IMR-90 (cell line): ENCODE measurements at regions of chr2 and their contacts with region 1.

Region 1: GRCh38 chr2:222982010-222982908 is 69.7 kb upstream of the KCNE4 start:
- DNase-seq: peak; percentile 89
- ATAC-seq: peak; percentile 95
- H3K4me3 ChIP-seq: no peak overlapping the region
- H3K27ac ChIP-seq: no peak overlapping the region
- H3K4me1 ChIP-seq: peaks cover 5% of the 10 kb centered on the region; the same call in 1 of the 2 replicates
- H3K27me3 ChIP-seq: no peaks in the 10 kb centered on the region
- CTCF ChIP-seq: peak; percentile 81
- POLR2A ChIP-seq: no peak
- RAD21 ChIP-seq: peak; percentile 85

Region 2: GRCh38 chr2:222922019-222922800 is 60.0 kb before region 1 on chr2:
- CTCF ChIA-PET with region 1: no interaction called
- POLR2A ChIA-PET with region 1: no interaction called
- dilution Hi-C with region 1: no loop called
- in situ Hi-C with region 1: no loop called
- intact Hi-C with region 1: no loop called
- DNase-seq: no peak
- ATAC-seq: no peak
- H3K4me3 ChIP-seq: no peak overlapping the region
- H3K27ac ChIP-seq: no peak overlapping the region
- H3K4me1 ChIP-seq: peaks cover 12% of the 10 kb centered on the region
- H3K27me3 ChIP-seq: no peaks in the 10 kb centered on the region
- CTCF ChIP-seq: no peak
- POLR2A ChIP-seq: no peak
- RAD21 ChIP-seq: no peak

Region 3: DNA sequence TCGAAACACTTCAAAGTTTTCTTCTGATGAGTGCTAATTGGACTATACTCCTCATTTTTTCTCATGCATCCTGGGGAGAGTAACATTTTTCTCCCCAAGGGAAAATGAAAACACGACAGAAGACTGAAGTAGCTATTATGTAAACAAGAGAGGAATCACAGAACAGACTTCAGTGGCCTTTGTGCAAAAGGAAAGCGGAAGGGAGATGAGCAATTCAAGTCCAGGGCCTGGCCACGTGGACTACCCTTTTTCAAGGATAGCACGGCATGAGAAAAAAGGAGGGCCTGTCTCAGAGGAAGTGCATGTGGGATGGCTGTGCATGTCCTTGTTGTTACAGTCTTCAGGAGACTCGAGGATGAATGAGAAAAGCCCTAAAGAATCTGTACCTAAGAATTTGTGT is 25.9 kb after region 1 on chr2:
- CTCF ChIA-PET with region 1: no interaction called
- POLR2A ChIA-PET with region 1: no interaction called
- dilution Hi-C with region 1: no loop called
- in situ Hi-C with region 1: no loop called
- intact Hi-C with region 1: no loop called
- DNase-seq: peak; percentile 77
- ATAC-seq: peak; percentile 33
- H3K4me3 ChIP-seq: no peak overlapping the region
- H3K27ac ChIP-seq: peak overlapping the region; percentile 33
- H3K4me1 ChIP-seq: peaks cover 9% of the 10 kb centered on the region
- H3K27me3 ChIP-seq: no peaks in the 10 kb centered on the region
- CTCF ChIP-seq: no peak
- POLR2A ChIP-seq: no peak
- RAD21 ChIP-seq: no peak

Region 4: GRCh38 chr2:223101340-223102039 is 119.2 kb after region 1 on chr2:
- CTCF ChIA-PET with region 1: interaction called, 4 read pairs
- POLR2A ChIA-PET with region 1: no interaction called
- dilution Hi-C with region 1: no loop called
- in situ Hi-C with region 1: no loop called
- intact Hi-C with region 1: loop called (anchors 1 kb)
- DNase-seq: peak; percentile 55
- ATAC-seq: peak; percentile 71
- H3K4me3 ChIP-seq: no peak overlapping the region
- H3K27ac ChIP-seq: no peak overlapping the region
- H3K4me1 ChIP-seq: peaks cover 4% of the 10 kb centered on the region
- H3K27me3 ChIP-seq: no peaks in the 10 kb centered on the region
- CTCF ChIP-seq: peak; percentile 58
- POLR2A ChIP-seq: no peak
- RAD21 ChIP-seq: peak; percentile 70

Region 5: GRCh38 chr2:223247136-223247535 is 264.9 kb after region 1 on chr2:
- CTCF ChIA-PET with region 1: interaction called, 3 read pairs
- POLR2A ChIA-PET with region 1: no interaction called
- dilution Hi-C with region 1: no loop called
- in situ Hi-C with region 1: no loop called
- intact Hi-C with region 1: loop called (anchors 1 kb)
- DNase-seq: peak; percentile 43
- ATAC-seq: peak; percentile 77
- H3K4me3 ChIP-seq: no peak overlapping the region
- H3K27ac ChIP-seq: no peak overlapping the region
- H3K4me1 ChIP-seq: no peaks in the 10 kb centered on the region
- H3K27me3 ChIP-seq: no peaks in the 10 kb centered on the region
- CTCF ChIP-seq: peak; percentile 63
- POLR2A ChIP-seq: no peak
- RAD21 ChIP-seq: peak; percentile 68

Region 6: GRCh38 chr2:223399357-223399957 is 417.2 kb after region 1 on chr2:
- CTCF ChIA-PET with region 1: no interaction called
- POLR2A ChIA-PET with region 1: no interaction called
- dilution Hi-C with region 1: no loop called
- in situ Hi-C with region 1: no loop called
- intact Hi-C with region 1: loop called (anchors 10 kb)
- DNase-seq: no peak
- ATAC-seq: no peak
- H3K4me3 ChIP-seq: no peak overlapping the region
- H3K27ac ChIP-seq: no peak overlapping the region
- H3K4me1 ChIP-seq: no peaks in the 10 kb centered on the region
- H3K27me3 ChIP-seq: no peaks in the 10 kb centered on the region
- CTCF ChIP-seq: no peak
- POLR2A ChIP-seq: no peak
- RAD21 ChIP-seq: no peak

Region 7: GRCh38 chr2:223501641-223502040 is 519.4 kb after region 1 on chr2:
- CTCF ChIA-PET with region 1: no interaction called
- POLR2A ChIA-PET with region 1: no interaction called
- dilution Hi-C with region 1: no loop called
- in situ Hi-C with region 1: no loop called
- intact Hi-C with region 1: no loop called
- DNase-seq: no peak
- ATAC-seq: no peak
- H3K4me3 ChIP-seq: no peak overlapping the region
- H3K27ac ChIP-seq: no peak overlapping the region
- H3K4me1 ChIP-seq: no peaks in the 10 kb centered on the region
- H3K27me3 ChIP-seq: peaks cover 1% of the 10 kb centered on the region
- CTCF ChIP-seq: no peak
- POLR2A ChIP-seq: no peak
- RAD21 ChIP-seq: no peak

Region 8: DNA sequence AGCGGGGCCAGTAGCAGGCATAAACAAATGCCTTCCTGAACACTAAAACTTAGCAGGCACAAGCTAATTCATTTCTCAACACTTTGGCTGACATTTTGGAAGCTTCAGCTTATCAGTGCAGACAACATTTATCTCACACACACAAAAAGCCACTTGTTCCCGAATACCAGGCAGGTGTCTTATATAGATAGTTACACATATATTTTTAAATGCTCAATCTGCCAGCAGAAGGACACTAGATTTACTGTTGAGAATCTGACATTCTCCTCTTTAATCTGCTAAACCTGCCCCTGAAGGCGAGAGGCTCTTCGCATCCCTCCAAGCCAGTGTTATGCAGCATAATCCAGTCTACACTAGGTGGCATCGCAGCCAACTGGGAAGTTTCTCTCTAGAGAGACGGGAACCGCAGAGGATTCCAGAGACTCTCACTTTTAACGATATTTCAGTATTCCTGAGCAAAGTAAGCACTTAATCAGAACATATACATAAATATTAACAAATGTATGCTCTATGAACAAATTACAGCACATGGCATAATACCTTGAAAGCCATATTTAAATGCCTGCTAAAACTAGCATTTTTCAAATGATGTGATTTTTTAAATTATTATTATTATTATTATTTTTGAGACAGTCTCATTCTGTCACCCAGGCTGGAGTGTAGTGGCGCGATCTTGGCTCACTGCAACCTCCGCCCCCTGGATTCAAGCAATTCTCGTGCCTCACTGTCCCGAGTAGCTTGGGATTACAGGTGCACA is 710.1 kb after region 1 on chr2:
- CTCF ChIA-PET with region 1: no interaction called
- POLR2A ChIA-PET with region 1: no interaction called
- dilution Hi-C with region 1: no loop called
- in situ Hi-C with region 1: no loop called
- intact Hi-C with region 1: loop called (anchors 10 kb)
- DNase-seq: peak; percentile 67
- ATAC-seq: peak; percentile 92
- H3K4me3 ChIP-seq: no peak overlapping the region
- H3K27ac ChIP-seq: no peak overlapping the region
- H3K4me1 ChIP-seq: peaks cover 6% of the 10 kb centered on the region
- H3K27me3 ChIP-seq: no peaks in the 10 kb centered on the region
- CTCF ChIP-seq: peak; percentile 80
- POLR2A ChIP-seq: no peak
- RAD21 ChIP-seq: peak; percentile 81